Right ventricle myocardium inferior (tissue), 1 donor: ENCODE measurements at regions of chr12 and their contacts with region 1.

Region 1: DNA sequence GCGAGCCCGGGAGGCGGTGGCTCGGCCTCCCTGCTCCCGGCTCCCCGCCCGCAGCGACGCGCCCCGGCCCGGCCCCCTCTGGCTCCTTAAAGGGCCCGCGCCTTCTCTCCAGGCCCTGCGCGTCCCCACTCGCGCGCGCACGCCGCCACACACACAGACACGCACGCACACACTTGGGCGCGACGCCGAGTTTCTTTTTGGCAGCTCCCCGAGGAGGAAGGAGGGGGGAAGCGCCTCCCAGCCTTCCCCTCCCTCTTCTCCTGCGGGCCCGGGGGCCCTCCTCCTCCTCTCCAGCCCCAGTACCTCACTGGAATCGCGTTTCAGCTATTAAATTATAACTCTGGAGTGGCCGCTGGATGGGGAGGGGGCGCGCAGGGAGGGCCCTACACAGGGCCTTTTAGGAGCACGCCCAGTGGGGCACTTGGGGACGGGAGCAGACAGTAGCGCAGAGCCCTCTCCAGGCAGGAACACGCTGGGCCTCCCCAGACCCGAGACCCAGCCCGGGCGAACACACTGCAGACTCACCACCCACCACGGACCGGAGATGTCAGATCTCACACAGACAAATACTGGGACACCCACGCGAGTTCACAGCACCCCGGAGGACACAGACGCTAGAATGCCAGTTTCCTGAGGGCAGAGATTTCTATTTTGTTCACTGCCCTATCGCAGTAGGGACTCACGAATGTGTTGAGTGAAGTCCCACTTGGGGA is 405 bp upstream of the NCOR2 start:
- DNase-seq: peak; percentile 99
- ATAC-seq: peak; percentile 89

Region 2: DNA sequence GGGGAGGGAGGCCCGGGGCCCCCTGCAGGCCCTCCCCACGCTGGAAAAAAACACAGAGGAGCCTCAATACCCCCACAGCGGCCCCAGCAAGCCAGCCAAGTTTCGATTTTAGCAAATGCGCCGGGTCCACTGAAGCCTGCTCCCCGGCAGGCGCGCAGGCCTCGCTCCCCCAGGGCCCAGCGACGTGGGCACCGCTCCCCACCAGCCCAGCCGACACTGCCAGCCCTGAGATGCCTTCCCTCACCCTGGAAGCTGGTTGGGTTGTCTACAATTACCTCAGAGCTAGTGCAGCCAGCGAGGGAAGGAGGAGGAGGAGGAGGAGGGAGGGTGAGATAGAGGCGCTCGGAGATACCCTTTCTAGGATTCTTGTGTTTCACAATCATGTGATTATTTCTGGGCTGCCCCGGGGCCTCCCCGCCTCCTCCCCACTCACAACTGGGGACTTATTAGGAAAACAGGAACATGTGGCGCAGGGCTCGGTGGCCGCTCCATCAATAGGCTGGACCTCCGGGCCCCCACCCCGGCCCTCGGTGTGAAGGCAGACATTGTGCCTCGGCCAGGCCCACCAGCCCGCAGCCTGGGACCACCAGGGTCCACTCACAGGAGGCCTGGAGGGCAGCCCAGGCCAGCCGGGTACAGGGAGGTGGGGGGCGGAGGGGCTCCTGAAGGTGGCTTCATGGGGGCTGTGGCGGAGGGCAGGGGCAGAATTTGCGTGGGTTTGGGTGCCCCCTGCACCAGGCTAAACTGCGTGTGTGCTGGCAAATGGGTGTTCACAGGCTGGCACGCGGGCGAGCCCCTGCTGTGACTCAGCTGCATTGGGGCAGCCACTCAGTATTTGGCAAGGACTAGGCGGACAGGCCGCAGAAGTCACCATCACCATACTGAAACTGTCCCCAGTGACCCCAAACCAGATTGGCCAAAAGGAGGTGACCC is 110.3 kb before region 1 on chr12:
- intact Hi-C with region 1: loop called (anchors 5 kb)
- DNase-seq: peak; percentile 90
- ATAC-seq: peak; percentile 86

Region 3: GRCh38 chr12:124625867-124626675 is 58.3 kb after region 1 on chr12:
- intact Hi-C with region 1: loop called (anchors 2 kb)
- DNase-seq: peak; percentile 94
- ATAC-seq: peak; percentile 87

Region 4: DNA sequence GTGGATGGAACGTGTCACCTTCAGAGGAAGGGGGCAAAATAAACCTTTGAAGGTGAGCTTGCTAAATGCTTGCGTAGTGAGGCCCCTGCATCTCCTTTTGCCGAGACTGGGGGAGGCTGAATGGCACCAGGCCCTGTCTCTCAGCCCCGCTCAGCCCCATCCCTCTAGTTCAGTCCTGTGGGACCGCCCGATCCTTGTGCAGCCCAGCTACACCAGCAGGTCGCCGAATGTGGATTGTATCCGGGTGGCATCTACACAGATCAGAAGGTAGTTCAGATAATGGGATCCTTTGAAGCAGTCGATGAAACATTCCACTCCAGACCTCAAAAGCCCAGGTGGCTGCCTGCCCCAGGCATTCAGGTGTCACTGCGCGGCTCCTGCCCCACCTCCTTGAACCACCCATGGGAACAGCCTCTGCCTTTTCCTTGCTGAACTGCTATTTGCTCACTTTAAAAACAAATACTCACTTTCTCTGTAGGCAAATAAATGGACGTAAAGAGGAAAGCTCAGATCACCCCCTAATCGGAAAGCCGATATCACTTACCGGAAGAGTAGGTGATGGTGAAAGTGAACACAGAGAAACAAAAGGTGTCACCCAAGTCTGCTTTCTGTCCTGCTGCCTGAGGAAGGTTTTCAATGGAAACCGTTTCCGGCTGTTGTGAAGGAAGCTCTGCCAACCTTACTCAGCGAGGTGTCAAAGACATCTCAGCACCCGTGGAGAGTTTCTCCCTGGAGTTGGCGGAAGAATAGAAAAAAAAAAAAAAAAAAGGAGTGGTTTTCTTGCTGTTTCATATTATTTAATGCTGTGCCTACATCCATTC is 99.9 kb after region 1 on chr12:
- intact Hi-C with region 1: no loop called
- DNase-seq: no peak
- ATAC-seq: no peak

Region 5: GRCh38 chr12:124680863-124681778 is 113.3 kb after region 1 on chr12:
- intact Hi-C with region 1: loop called (anchors 5 kb)
- DNase-seq: peak; percentile 77
- ATAC-seq: peak; percentile 79